Colonic mucosa (tissue), 4 donors: ENCODE measurements at regions of chr6 and their contacts with region 1.

Region 1: DNA sequence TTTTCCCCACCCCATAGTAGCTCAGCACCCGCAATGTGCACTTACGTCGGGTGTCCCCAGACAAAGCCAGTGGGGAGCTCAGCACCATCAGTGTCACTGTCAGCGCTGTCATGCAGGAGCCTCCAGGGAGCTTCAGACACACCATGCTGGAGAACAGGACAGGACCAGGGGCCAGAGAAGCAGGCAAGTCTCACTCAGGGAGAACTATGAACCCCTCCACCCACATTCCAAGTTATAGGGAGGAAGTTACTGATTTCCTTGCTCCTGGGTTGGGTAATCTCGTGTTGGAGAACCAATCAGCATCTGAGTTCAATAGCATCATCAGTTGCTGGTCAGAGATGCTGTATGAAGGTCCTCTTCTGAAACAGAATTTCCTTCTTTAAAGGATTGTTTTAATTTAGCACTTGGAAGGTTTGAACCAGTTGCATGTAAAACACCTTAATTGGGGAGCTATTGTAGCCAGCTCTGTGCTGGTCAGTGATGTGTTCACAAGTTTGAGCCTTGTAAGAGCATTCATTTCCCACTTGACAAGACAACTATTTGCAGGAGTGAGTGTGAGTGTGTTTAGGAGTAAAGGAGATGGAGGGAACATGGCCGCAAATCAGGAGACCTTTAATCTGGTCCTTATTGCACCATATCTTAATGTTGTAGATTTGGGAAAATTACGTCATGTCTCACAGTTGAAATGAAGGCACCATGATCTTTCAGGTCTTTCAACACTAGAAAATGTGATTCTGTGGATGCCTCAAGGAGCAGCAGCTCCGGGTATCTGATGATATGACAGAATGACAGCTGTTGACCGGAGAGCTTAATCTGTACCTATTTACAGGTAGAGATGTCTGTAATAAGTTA is at the start of gene HLA-DRB1:
- DNase-seq: peak; percentile 24
- H3K4me3 ChIP-seq: no peak within 1 kb of the TSS
- H3K27ac ChIP-seq: no peak within 1 kb of the TSS
- H3K4me1 ChIP-seq: no peaks in the 10 kb centered on the region
- H3K27me3 ChIP-seq: no peaks in the 10 kb centered on the region
- CTCF ChIP-seq: no peak
- total RNA-seq, gene HLA-DRB1: 22.5 to 39.3 TPM

Region 2: DNA sequence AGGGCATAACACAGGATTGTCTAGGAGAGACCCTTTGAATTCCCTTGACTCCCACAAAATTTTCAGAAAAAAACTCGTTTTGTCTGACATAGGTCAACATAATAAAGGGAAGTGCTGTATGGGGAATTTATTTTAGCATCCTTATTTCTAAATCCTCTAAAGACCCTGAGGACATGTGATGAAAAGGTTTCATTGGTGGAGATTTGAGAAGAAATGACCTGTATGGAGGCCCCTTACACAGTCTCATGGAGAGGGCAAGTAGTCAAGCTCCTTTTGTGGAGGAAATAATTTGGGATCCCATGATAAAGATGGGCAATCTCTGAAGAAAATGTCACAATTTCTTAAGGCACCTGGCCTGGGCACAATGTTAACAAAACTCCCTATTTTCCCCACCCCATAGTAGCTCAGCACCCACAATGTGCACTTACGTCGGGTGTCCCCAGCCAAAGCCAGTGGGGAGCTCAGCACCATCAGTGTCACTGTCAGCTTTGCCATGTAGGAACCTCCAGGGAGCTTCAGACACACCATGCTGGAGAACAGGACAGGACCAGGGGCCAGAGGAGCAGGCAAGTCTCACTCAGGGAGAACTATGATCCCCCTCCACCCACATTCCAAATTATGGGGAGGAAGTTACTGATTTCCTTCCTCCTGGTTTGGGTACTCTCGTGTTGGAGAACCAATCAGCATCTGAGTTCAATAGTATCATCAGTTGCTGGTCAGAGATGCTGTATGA is 60.0 kb before region 1 on chr6 and contains the start of gene HLA-DRB5:
- intact Hi-C with region 1: loop called (anchors 10 kb)
- DNase-seq: no peak
- H3K4me3 ChIP-seq: no peak within 1 kb of the TSS
- H3K27ac ChIP-seq: no peak within 1 kb of the TSS
- H3K4me1 ChIP-seq: no peaks in the 10 kb centered on the region
- H3K27me3 ChIP-seq: no peaks in the 10 kb centered on the region
- CTCF ChIP-seq: no peak
- total RNA-seq, gene HLA-DRB5: 4.8 to 26.7 TPM